Thyroid gland (tissue), 4 donors: ENCODE measurements at regions of chr20 and their contacts with region 1.

Region 1: GRCh38 chr20:63864847-63865640 is at the start of gene TPD52L2:
- DNase-seq: peak; percentile 100
- H3K4me3 ChIP-seq: peak within 1 kb of the TSS; percentile 86 to 95 (median 87)
- H3K27ac ChIP-seq: peak within 1 kb of the TSS; percentile 90 to 96 (median 93)
- H3K4me1 ChIP-seq: peaks cover 10 to 31% of the 10 kb centered on the region in 2 donors
- H3K27me3 ChIP-seq: no peaks in the 10 kb centered on the region
- CTCF ChIP-seq: no peak
- POLR2A ChIP-seq: peak; percentile 41 to 91
- total RNA-seq, gene TPD52L2: 69.4 to 93.3 (median 89.6) TPM

Region 2: GRCh38 chr20:63657937-63658748 is 206.9 kb before region 1 on chr20 and contains the start of gene RTEL1:
- intact Hi-C with region 1: no loop called
- DNase-seq: peak; percentile 92 to 93
- H3K4me3 ChIP-seq: peak within 1 kb of the TSS; percentile 10 to 80 (median 53)
- H3K27ac ChIP-seq: peak within 1 kb of the TSS; percentile 49 to 86 (median 76)
- H3K4me1 ChIP-seq: peaks cover 21 to 24% of the 10 kb centered on the region in 2 donors
- H3K27me3 ChIP-seq: no peaks in the 10 kb centered on the region
- CTCF ChIP-seq: peak in 4 of 6 experiments; percentile 7 to 35 (median 30)
- POLR2A ChIP-seq: peak in 1 of 2 donors; percentile 45
- total RNA-seq, gene RTEL1: 14.1 to 87.4 (median 54.2) TPM

Region 3: DNA sequence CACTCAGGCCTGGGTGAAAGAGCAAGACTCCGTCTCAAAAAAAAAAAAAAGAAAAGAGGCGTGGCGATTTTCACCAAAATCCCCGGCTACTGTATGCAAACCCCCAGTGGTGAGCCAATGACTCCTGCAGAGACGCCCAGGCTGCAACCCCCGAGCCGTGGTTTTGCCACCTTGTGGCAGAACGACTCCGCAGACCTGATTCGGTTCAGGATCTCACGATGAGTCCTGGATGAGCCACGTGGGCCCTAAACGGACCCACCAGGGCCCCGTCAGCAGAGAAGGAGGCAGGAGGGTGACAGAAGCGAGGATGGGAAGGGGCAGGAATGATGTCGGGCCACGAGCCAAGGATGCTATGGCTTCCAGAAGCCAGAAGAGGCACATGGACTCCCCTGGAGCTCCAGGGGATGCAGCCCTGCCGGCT is 83.0 kb before region 1 on chr20:
- intact Hi-C with region 1: loop called (anchors 2 kb)
- DNase-seq: no peak
- H3K4me3 ChIP-seq: no peak overlapping the region
- H3K27ac ChIP-seq: no peak overlapping the region
- H3K4me1 ChIP-seq: no peaks in the 10 kb centered on the region
- H3K27me3 ChIP-seq: no peaks in the 10 kb centered on the region
- CTCF ChIP-seq: no peak
- POLR2A ChIP-seq: no peak

Region 4: DNA sequence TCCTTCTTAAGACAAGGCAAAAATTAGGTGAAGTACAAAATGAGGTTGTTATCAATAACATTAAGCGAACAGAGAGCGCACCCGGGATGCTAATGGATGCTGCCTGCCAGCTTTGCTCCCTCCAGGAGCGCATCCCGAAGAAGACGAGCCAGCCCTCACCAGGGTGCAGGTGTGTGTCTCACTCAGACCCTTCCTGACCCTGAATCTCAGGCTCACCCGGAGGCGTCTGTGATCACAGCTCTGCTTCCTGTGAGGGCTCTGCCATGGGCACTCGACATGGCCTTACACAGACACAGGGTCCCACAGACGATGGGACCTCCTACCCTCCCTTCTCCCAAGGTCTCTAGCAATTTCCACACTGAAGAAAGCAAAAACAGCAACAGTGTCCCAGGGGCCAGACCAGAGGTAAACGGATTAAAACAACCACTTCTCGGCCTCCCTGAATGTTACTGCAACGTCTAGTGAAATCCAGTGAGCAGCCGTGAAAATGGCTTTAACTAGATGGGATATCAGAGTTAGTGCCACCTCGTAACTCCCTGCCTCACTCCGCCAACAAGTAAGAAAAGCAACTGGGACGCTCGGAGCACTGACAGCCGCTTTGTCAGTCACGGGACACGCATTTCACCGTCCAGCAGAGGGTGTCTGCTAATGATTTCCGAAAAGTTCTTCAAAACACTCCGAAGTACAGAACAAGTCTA is 45.7 kb before region 1 on chr20:
- intact Hi-C with region 1: no loop called
- DNase-seq: no peak
- H3K4me3 ChIP-seq: no peak overlapping the region
- H3K27ac ChIP-seq: peak overlapping the region in 1 of 3 donors; percentile 13
- H3K4me1 ChIP-seq: peaks cover 0 to 5% of the 10 kb centered on the region in 2 donors
- H3K27me3 ChIP-seq: no peaks in the 10 kb centered on the region
- CTCF ChIP-seq: peak in 1 of 6 experiments; percentile 14
- POLR2A ChIP-seq: no peak

Region 5: GRCh38 chr20:63829932-63830835 is 34.9 kb before region 1 on chr20:
- intact Hi-C with region 1: loop called (anchors 5 kb)
- DNase-seq: peak in 1 of 2 donors; percentile 28
- H3K4me3 ChIP-seq: peak overlapping the region; percentile 7 to 73 (median 70)
- H3K27ac ChIP-seq: peak overlapping the region; percentile 33 to 53 (median 41)
- H3K4me1 ChIP-seq: peaks cover 42 to 59% of the 10 kb centered on the region in 2 donors
- H3K27me3 ChIP-seq: no peaks in the 10 kb centered on the region
- CTCF ChIP-seq: no peak
- POLR2A ChIP-seq: no peak

Region 6: DNA sequence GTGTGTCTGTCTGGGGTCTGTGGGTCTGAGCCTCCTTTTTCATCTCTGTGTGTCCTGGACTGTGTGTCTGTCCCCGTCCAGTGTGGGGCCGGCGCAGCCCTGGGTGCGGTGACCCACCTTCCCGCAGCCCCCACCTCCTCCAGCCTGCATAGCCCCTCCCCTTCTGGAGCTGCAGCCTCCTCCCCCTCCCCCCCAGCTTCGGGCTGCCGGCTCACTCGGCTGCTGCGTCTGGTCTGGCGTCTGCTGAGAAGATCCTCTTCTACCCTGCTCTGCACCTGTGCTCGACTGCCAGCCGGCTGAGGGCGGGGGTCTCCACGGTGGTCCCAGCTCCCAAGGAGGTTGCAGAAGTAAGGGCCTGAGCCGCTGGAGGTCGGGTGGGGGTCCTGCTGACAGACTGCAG is 226.7 kb after region 1 on chr20:
- intact Hi-C with region 1: no loop called
- DNase-seq: no peak
- H3K4me3 ChIP-seq: no peak overlapping the region
- H3K27ac ChIP-seq: no peak overlapping the region
- H3K4me1 ChIP-seq: no peaks in the 10 kb centered on the region
- H3K27me3 ChIP-seq: no peaks in the 10 kb centered on the region
- CTCF ChIP-seq: no peak
- POLR2A ChIP-seq: no peak

Region 7: DNA sequence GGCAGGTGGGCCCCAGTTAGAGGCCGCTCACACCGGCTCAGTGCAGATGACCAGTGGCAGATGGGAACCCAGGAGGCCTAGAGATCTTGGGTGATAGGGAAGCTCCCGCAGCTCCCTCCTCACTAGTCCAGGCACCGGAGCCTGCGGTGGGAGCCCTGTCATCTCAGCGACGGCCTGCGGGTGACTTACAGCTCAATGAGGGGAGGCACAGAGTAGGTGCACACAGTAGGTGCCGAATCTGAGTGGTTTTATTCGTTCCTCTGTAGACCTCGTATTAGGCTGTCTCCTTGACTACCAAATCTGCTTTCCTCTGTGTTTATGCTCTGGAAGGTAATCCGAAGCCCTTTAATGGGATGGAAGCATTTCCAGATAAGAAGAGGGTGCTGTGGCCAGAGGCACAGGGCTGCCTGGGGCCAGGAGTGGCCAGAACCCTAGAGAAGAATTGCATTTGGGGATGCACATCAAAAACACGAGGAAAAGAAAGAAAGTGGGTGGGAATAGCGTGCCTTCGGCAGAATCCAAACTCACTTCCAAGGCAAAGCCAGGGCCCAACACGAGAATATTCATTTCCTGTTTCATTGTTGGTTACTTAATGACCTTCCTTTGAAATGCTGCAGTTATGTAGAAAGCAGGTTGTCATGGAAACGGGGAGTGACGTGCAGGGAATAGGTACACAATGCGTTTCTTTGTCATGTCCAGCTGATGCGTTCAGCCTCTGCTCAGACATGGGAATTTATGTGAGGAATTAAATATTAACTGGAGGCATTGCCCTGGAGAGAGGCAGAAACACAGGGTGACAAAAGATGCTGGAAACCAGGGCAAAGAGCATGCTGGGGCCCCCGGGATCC is 323.9 kb after region 1 on chr20:
- intact Hi-C with region 1: no loop called
- DNase-seq: no peak
- H3K4me3 ChIP-seq: no peak overlapping the region
- H3K27ac ChIP-seq: no peak overlapping the region
- H3K4me1 ChIP-seq: no peaks in the 10 kb centered on the region
- H3K27me3 ChIP-seq: no peaks in the 10 kb centered on the region
- CTCF ChIP-seq: no peak
- POLR2A ChIP-seq: no peak